ENCODE measurements at regions of chr1 and their contacts with region 1.

Region 1: DNA sequence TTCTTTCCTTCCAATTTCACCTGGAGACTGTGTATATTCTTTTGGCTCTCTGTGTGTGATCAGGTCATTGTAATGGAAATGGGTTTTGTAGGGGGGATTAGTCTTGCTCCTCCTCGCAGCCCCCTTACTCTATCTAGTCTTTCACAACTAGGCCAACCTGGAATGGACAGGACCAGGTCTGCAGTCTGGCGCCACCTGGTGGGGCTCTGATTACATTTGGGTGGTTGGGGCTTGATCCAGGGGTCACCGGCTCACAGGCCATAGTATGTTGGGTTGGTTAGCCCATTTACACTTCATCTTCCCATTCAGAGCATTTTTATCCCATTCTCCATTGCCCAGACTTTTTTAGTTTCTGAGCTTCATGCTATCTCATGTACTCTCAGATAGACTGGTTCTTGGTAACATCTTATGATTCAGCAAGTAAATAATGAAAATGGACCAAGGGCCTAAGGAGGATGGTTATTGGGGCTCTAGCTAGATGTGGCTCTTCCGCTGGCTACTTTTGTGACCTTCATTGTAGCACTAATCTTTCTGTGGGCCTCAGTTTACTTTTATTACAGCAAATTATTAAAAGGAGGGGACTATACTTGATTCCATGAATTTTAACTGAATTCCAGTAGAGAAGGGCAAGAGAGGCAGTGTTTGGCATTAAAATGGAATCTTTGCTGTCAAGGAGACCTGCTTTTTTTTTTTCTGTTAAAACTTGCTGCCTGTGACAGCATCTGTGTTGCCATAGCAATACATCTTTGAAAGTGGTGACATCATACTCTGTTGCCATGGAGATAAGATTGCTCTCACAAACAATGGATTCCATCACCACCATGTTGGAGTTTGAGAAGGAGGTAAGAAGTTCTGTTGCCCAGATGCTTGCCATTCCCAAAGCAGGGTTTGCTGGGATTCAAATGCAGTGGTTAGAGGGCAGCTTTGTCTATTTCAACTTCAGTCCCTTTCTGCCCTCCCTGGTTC is 150.1 kb downstream of the PLXNA2 start:
- DNase-seq: peak; percentile 31
- H3K4me3 ChIP-seq: no peak overlapping the region
- H3K27me3 ChIP-seq: no peaks in the 10 kb centered on the region
- CTCF ChIP-seq: peak; percentile 87

Region 2: DNA sequence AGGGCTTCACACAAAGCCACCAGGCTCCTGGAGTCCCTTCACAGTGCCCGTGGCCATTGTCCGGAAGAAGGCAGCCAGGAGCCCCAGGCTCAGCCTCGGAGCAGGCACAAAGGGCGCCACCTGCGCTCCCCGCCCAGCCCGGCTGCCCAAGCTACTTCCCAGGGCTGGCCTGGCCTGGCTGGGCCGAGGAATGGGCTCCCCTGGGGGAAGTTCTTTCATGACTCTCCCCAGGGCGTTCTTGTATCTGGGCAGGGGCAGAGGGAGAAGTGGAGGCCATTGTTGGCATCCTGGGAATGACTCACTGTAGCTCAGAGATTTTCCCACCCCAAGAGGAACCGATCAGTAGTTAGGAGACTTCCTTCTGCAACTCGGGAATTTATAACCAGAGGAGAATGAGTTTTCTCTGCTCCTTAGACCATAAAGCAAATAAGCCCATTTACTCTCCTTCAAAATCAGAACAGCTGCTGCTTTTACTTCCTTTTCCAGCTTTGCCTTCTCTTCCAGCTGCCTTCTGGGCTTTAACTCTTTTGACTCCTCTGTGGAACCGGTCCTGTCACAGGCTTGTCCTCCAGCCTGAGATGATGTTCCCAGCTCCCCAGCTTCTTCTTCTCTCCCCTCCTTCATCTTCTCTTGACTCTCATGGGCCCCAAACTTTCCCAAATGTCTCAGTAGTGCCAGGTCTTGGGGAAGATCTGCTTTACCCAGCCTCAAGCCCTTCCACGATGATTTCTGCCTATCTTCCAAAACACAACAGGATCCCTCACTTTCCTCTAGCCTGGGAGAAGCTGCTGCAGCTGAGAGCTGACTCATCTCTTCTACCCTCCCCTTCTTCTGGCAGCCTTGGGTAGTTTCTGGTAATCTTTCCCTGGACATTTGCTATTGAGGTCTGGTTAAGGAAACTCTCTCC is 64.4 kb before region 1 on chr1:
- CTCF ChIA-PET with region 1: interaction called, 151 read pairs
- POLR2A ChIA-PET with region 1: no interaction called
- DNase-seq: no peak
- H3K4me3 ChIP-seq: no peak overlapping the region
- H3K27me3 ChIP-seq: no peaks in the 10 kb centered on the region
- CTCF ChIP-seq: no peak

Region 3: DNA sequence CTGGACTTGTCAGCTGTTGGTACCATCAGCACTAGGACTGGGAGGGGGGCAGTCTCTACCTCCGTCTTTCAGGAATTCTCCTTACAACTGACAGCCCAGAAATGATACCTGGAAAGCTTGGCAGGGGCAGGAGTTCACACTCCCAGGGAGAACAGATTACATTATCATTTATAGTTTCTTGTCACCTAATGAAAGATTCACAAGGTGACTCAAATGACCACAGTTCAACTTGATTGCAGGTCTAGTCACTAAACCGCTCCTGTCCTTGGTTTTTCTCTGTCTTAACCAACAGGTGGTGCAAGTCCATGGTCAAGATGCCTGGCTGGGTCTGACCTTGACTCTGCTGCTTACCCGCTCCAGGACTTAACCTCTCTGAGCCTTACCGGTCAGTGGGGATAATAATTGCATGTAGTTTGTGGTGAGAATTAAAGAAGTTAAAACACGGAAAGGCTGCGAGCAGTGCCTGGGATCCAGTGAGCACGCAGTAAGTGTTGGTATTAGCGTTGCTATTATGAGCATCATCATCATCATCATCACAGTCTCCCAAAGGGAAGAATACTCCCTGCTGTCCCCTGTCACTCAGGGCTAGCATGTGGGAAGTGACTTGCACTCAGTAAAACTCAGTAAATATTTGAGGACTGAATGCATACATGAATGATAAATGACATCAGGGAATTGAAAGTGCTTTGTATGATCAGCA is 57.8 kb before region 1 on chr1:
- CTCF ChIA-PET with region 1: interaction called, 10 read pairs
- POLR2A ChIA-PET with region 1: no interaction called
- DNase-seq: no peak
- H3K4me3 ChIP-seq: no peak overlapping the region
- H3K27me3 ChIP-seq: no peaks in the 10 kb centered on the region
- CTCF ChIP-seq: 0 out of 2 replicates have a peak, but pooled peaks have one; percentile 17

Region 4: GRCh38 chr1:208081972-208082371 is 12.1 kb before region 1 on chr1:
- CTCF ChIA-PET with region 1: interaction called, 13 read pairs
- POLR2A ChIA-PET with region 1: no interaction called
- DNase-seq: no peak
- H3K4me3 ChIP-seq: no peak overlapping the region
- H3K27me3 ChIP-seq: no peaks in the 10 kb centered on the region
- CTCF ChIP-seq: peak; percentile 31; the same call in 1 of the 2 replicates

Region 5: DNA sequence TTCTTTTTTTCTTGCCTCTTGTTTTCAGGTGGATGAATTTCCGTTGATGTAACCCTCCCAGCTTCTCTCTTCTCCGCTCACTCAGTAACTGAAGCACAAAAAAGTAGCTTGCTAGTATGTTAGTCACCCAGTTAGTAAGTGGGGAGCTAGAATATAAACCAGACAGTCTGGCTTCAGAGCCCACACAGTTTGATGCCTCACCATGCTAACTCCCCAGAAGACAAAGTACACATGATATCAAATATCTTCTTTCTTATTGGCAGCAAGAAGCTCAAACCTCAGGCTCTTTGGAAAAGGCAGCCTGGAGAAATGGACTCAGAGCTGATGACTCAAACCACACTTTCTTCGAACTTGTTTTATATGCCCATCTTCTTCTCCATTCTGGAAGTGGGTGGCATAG is 337.7 kb after region 1 on chr1:
- CTCF ChIA-PET with region 1: no interaction called
- POLR2A ChIA-PET with region 1: no interaction called
- DNase-seq: peak; percentile 76
- H3K4me3 ChIP-seq: no peak overlapping the region
- H3K27me3 ChIP-seq: no peaks in the 10 kb centered on the region
- CTCF ChIP-seq: no peak